Activated T-helper 1 cell treated with anti-CD3 and anti-CD28 coated beads, Interleukin-12 subunit alpha, Interleukin-12 subunit beta, Interleukin-2, Interleukin-4 antibody, amounts not matched to agents 30 ng/mL and 10 ng/mL and 1 ng/mL, durations not matched to agents 14 hours and 24 hours and 36 hours (primary cell): ENCODE measurements at regions of chr17 and their contacts with region 1.

Region 1: GRCh38 chr17:16380640-16381495 is at the start of gene UBB:
- DNase-seq: peak; percentile 94
- H3K4me3 Mint-ChIP-seq: peak within 1 kb of the TSS; percentile 90
- H3K27ac Mint-ChIP-seq: peak within 1 kb of the TSS; percentile 92
- H3K4me1 Mint-ChIP-seq: peaks cover 29% of the 10 kb centered on the region
- H3K27me3 Mint-ChIP-seq: peaks cover 1% of the 10 kb centered on the region
- total RNA-seq, gene UBB: 1,933 and 1,974 TPM in 2 replicates

Region 2: GRCh38 chr17:16215273-16215964 is 165.4 kb before region 1 on chr17 and contains the start of gene NCOR1:
- intact Hi-C with region 1: loop called (anchors 2 kb)
- DNase-seq: peak; percentile 87
- H3K4me3 Mint-ChIP-seq: peak within 1 kb of the TSS; percentile 96
- H3K27ac Mint-ChIP-seq: peak within 1 kb of the TSS; percentile 77
- H3K4me1 Mint-ChIP-seq: peaks cover 27% of the 10 kb centered on the region
- H3K27me3 Mint-ChIP-seq: no peaks in the 10 kb centered on the region
- total RNA-seq, gene NCOR1: 123 and 131 TPM in 2 replicates

Region 3: DNA sequence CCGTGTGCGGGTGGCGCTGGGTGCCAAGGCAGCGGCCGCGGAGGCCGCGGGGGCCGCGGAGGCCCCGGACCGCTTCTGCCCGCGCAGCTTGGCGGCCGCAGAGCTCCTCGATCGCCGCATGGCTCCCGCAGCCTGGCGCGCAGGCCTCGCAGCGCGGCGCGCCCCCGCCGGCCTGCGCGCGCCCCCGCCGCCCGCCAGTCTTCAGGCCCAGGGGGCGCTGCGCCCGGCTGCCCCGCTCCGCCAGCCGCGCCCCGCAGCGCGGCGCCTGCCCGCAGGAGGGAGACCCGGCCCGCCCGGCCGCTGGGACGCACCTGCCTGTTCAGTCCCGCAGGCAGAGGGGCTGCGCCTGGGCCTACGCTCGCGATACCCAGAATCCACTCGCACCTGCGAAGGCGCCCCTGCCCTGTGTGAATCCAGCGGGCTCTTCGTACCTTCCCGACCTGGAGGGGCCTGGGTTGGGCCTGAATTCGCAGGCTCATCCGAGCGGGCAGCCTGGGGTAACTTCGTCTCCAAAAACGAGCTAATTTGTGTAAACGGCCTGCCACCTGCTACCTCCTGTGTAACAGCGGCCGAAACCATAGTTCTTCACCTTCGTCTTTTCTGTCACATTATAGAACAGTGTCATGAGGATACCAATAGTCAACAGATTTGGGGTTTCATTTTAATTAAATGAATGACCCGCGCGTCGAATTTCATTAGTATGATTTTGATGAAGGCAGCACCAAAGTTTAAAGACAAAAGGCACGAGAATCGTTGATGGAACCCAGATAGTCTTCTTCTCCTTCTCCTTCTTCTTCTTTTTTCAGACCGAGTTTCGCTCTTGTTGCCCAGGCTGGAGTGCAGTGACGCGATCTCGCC is 27.3 kb before region 1 on chr17 and contains the start of gene CENPV:
- intact Hi-C with region 1: loop called (anchors 1 kb)
- DNase-seq: peak; percentile 49
- H3K4me3 Mint-ChIP-seq: peak within 1 kb of the TSS; percentile 95
- H3K27ac Mint-ChIP-seq: peak within 1 kb of the TSS; percentile 77
- H3K4me1 Mint-ChIP-seq: peaks cover 16% of the 10 kb centered on the region
- H3K27me3 Mint-ChIP-seq: peaks cover 22% of the 10 kb centered on the region
- total RNA-seq, gene CENPV: 47.1 and 54.7 TPM in 2 replicates

Region 4: DNA sequence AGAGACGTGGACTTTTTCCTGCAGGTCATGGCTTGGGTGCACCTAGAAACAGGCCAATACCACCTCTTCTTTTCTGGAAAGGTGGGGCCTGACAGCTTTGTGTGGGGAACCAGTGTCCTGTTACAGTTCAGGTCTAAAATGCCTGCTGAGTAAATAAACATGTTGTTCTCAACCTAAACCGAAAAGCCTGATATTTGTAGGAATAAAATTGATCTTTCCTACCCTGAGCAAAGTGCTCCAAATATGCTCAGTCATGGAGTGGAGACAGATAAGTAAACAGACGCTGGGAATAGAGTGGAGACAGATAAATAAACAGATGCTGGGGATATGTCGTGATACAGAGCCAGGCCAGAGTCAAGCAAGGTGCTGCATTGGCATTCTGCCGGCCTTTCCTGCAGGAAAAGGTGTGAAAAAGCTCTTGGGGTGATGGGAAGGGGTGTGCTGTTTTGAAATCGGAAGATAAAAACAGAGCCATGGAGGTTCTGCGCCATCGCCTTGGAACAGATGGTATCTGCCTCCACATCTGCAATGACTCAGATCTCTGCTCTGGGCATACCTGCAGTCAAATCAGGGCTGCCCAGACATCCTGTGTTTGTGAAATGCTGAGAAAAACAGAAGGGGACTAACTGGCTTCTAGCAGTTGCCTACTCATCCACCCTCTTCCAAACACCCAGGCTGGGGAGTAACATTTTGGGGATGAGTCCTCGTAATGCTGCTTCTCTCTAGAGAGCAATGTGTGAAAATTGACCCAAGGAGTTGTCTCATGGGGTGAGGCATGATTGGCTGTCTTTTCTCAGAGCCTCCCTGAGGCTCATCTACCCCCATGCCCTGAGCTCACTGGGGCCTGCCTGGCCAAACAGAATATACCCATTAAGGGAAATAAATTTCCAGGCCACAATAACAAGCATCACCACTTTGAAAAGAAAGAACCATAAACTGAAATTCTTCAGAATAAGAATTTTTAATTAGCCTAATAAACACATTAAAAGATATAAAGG is 17.7 kb after region 1 on chr17:
- intact Hi-C with region 1: loop called (anchors 2 kb)
- DNase-seq: no peak
- H3K4me3 Mint-ChIP-seq: no peak overlapping the region
- H3K27ac Mint-ChIP-seq: peak overlapping the region; percentile 5
- H3K4me1 Mint-ChIP-seq: peaks cover 10% of the 10 kb centered on the region
- H3K27me3 Mint-ChIP-seq: peaks cover 5% of the 10 kb centered on the region

Region 5: DNA sequence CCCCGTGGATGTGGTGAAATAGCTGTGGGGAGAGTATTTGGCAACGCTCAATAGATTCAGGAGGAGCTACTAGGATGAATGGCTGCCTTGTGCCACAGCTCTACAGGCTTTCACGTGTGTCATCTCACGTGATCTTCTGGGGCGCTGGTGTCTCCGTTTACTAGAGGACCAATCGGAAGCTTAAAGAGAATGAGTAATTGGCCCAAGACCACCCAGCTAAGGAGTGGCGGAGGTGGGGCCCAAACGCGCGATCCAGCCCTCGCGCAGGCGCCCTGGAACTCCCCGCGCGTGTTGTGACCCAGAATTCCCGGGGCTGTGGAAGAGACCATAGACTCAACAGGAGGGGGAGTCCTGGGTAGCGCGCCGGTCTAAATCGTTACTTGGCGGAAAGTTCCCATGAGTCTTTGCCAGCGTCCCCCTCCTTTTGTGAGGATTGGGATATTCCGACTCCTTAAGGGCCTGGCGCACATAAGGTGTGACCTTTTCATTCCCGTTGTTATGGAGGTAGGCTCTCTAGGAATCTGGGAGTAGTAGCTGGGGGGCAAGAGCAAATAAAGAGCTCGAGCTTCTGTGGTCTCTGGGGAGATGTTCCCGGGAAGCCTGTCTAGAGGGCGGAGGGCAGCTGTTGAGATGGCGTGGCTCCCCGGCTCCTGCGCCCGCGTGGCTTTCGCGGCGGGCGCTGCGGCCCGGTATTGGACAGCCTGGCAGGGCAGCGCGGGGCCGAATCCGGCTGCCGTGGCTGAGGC is 57.9 kb after region 1 on chr17:
- intact Hi-C with region 1: loop called (anchors 1 kb)
- DNase-seq: peak; percentile 92
- H3K4me3 Mint-ChIP-seq: peak overlapping the region; percentile 99
- H3K27ac Mint-ChIP-seq: peak overlapping the region; percentile 98
- H3K4me1 Mint-ChIP-seq: peaks cover 61% of the 10 kb centered on the region
- H3K27me3 Mint-ChIP-seq: no peaks in the 10 kb centered on the region

Region 6: DNA sequence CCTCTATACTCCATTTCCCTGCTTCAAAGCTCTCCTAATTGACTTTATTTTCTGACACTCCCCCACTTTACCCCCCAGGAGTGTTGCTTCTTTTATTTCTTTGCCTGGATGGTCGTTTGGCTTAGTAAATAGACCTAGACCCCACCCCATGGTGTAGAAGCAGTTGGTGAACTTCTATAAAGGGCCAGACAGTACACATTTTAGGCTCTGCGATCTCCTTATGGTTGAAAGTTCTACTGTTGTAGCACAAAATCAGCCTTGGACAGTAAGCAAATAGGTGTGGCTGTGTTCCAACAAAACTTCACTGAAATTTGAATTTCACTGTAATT is 156.2 kb after region 1 on chr17:
- intact Hi-C with region 1: loop called (anchors 1 kb)
- DNase-seq: no peak
- H3K4me3 Mint-ChIP-seq: peak overlapping the region; percentile 91
- H3K27ac Mint-ChIP-seq: peak overlapping the region; percentile 52
- H3K4me1 Mint-ChIP-seq: peaks cover 16% of the 10 kb centered on the region
- H3K27me3 Mint-ChIP-seq: no peaks in the 10 kb centered on the region

Region 7: GRCh38 chr17:16589097-16589969 is 208.5 kb after region 1 on chr17:
- intact Hi-C with region 1: loop called (anchors 1 kb)
- DNase-seq: peak; percentile 89
- H3K4me3 Mint-ChIP-seq: peak overlapping the region; percentile 72
- H3K27ac Mint-ChIP-seq: no peak overlapping the region
- H3K4me1 Mint-ChIP-seq: peaks cover 18% of the 10 kb centered on the region
- H3K27me3 Mint-ChIP-seq: peaks cover 47% of the 10 kb centered on the region